ENCODE measurements at regions of chr15 and their contacts with region 1.

Region 1: GRCh38 chr15:91055548-91056331 is 33.3 kb upstream of the VPS33B start:
- DNase-seq: peak; percentile 31 to 87 (median 78)
- H3K4me3 ChIP-seq: peak overlapping the region in 52 of 59 donors; percentile 3 to 63 (median 41)
- H3K27ac ChIP-seq: peak overlapping the region in 28 of 59 donors; percentile 2 to 75 (median 50)
- H3K27me3 ChIP-seq: peaks cover 0 to 5% (median 0%) of the 10 kb centered on the region in 45 donors
- CTCF ChIP-seq: peak; percentile 15 to 98 (median 85)

Region 2: GRCh38 chr15:91099616-91099994 is 43.9 kb after region 1 on chr15:
- intact Hi-C with region 1: loop called (anchors 5 kb)
- DNase-seq: peak; percentile 34 to 81 (median 72)
- H3K4me3 ChIP-seq: peak overlapping the region; percentile 37 to 89 (median 70)
- H3K27ac ChIP-seq: peak overlapping the region in 54 of 59 donors; percentile 21 to 96 (median 86)
- H3K27me3 ChIP-seq: peaks cover 0 to 28% (median 4%) of the 10 kb centered on the region in 45 donors
- CTCF ChIP-seq: peak in 37 of 56 donors; percentile 9 to 59 (median 31)

Region 3: DNA sequence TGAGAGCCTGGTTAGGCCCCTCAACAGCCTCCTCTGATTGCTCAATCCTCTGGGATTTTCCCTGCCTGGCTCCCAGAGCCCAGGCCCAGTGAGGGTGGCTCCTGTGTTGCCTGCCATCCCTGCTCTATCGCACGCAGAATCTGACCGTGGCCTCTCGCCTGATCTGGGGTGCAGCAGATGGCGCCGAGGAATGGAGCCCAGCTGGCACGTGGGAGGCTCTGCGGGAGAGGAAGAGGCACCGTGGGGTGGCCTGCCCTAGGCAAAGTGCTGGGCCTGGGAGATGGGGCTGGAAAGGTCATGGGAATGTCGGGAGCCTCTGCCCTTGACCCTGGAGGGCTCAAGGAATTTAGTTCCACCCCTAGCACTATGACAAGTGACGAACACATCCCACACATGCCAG is 54.7 kb after region 1 on chr15:
- intact Hi-C with region 1: no loop called
- DNase-seq: peak in 2 of 10 donors; percentile 65 to 79
- H3K4me3 ChIP-seq: peak overlapping the region in 1 of 59 donors; percentile 13
- H3K27ac ChIP-seq: peak overlapping the region in 37 of 59 donors; percentile 2 to 79 (median 35)
- H3K27me3 ChIP-seq: peaks cover 0 to 3% (median 0%) of the 10 kb centered on the region in 45 donors
- CTCF ChIP-seq: no peak

Region 4: GRCh38 chr15:91224755-91225380 is 169.1 kb after region 1 on chr15:
- intact Hi-C with region 1: loop called (anchors 1 to 5 kb)
- DNase-seq: no peak
- H3K4me3 ChIP-seq: no peak overlapping the region
- H3K27ac ChIP-seq: peak overlapping the region in 1 of 59 donors; percentile 89
- H3K27me3 ChIP-seq: peaks cover 0 to 7% (median 0%) of the 10 kb centered on the region in 45 donors
- CTCF ChIP-seq: peak; percentile 55 to 86 (median 74)

Region 5: DNA sequence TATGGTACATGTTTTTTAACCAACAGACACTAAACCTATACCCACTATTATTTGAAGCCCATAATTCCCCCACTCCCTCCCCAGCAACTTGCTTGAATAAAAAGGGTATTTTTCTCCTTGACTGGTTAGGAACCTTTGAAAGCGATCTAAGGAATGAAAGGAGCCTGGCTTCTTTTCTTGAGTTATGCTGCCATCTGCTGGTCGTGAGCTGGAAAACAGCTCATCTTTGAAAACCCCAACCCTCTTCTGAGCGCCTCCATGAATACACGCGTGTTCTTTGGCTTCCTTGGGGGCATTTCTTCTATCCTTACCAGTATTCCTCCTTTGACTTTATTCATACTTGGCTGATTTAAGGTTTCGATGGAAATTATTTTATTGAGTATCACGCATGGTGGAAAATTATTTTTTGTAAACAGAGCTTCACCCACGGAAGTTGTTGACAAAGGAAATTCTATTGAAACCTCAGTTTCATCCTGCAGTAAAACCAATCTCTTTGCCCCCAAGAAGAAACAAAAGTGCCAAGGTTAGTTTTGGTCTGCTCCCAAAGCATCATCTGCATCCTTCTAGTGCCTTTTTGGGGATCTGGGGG is 215.9 kb after region 1 on chr15:
- intact Hi-C with region 1: loop called (anchors 2 kb)
- DNase-seq: peak in 9 of 10 donors; percentile 18 to 69 (median 63)
- H3K4me3 ChIP-seq: no peak overlapping the region
- H3K27ac ChIP-seq: peak overlapping the region in 6 of 59 donors; percentile 1 to 20 (median 18)
- H3K27me3 ChIP-seq: no peaks in the 10 kb centered on the region
- CTCF ChIP-seq: peak; percentile 82 to 98 (median 91)

Region 6: DNA sequence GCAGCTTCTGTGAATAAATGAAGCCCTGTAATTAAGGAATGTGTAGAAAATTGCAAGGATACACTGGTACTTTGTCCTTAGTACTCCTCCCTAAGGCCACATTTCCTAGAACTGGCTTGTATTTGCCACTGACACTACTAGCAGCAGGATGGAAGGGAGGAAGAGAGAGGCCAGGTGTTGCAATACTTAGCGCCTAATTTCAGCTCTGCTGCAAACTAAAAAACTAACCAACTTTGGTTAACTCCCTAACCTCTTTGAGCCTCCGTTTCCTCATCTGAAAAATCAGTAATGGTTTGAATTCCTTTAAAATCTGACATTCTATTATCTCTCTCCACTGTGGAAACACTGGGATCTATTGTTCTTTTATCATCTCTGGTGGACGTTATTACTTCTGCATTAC is 301.3 kb after region 1 on chr15:
- intact Hi-C with region 1: no loop called
- DNase-seq: no peak
- H3K4me3 ChIP-seq: no peak overlapping the region
- H3K27ac ChIP-seq: no peak overlapping the region
- H3K27me3 ChIP-seq: peaks cover 0 to 13% (median 0%) of the 10 kb centered on the region in 45 donors
- CTCF ChIP-seq: no peak

Measured in dorsolateral prefrontal cortex (tissue), 120 donors.